OCI-LY7 (cell line): ENCODE measurements at regions of chr13 and their contacts with region 1.

Region 1: DNA sequence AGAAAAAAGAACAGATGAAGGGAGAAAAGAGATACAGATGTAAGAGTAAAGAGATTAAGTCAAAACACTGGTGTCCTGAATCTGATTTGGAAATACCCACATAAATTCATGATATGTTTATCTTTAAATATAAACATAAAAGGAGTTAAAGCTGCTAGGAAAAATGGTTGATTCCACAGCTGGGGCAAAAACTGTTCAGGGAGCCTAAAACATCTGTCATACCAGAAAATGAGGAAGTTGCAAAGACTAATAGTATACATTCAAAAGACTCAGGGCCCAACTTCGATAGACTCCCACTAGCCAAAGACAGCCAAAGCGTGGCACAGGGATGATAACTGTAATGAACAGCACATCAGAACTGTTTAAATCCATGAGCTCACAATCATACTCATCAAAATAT is 62.0 kb downstream of the ABCC4 start:
- DNase-seq: peak; percentile 68
- H3K4me3 ChIP-seq: no peak overlapping the region
- H3K27ac ChIP-seq: peak overlapping the region; percentile 63
- H3K4me1 ChIP-seq: peaks cover 45% of the 10 kb centered on the region
- CTCF ChIP-seq: no peak

Region 2: GRCh38 chr13:95156208-95156607 is 83.1 kb before region 1 on chr13:
- CTCF ChIA-PET with region 1: no interaction called
- POLR2A ChIA-PET with region 1: no interaction called
- intact Hi-C with region 1: no loop called
- DNase-seq: no peak
- H3K4me3 ChIP-seq: no peak overlapping the region
- H3K27ac ChIP-seq: no peak overlapping the region
- H3K4me1 ChIP-seq: no peaks in the 10 kb centered on the region
- CTCF ChIP-seq: no peak

Region 3: GRCh38 chr13:95284436-95284835 is 45.2 kb after region 1 on chr13:
- CTCF ChIA-PET with region 1: no interaction called
- POLR2A ChIA-PET with region 1: no interaction called
- intact Hi-C with region 1: loop called (anchors 5 kb)
- DNase-seq: no peak
- H3K4me3 ChIP-seq: no peak overlapping the region
- H3K27ac ChIP-seq: no peak overlapping the region
- H3K4me1 ChIP-seq: peaks cover 33% of the 10 kb centered on the region
- CTCF ChIP-seq: no peak